ENCODE measurements at regions of chr5 and their contacts with region 1.

Region 1: DNA sequence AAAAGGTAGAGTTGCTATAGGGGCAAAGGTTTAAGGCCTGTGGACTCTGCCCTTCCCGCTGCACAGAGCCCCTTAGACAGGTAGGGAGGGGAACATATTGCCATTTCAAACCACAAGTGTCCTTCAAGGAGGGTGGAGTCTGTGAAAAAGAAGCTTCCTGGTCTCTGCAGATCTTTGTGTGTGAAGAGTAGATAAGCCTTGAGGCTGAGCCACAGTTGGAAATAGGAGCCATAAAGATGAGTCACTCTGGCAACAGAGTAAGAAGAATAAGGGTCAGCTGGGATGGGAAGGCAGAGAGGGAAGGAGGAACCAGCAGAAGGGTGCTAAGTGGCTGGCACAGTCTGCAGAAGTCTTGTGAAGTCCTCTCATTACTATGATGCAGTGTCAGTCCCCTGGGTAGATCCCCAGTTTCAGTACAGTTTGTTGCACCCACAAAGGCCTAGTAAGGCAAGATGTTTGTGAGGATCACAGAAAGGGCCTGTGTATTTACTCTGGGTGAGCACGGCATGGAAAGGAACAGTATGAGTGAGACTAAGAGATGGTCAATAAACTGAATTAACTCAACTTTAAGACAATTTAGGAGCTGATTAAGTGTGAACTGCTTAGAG is 18.1 kb downstream of the GRXCR2 start:
- DNase-seq: peak; percentile 83
- ATAC-seq: peak; percentile 98
- H3K4me3 ChIP-seq: no peak overlapping the region
- H3K27ac ChIP-seq: peak overlapping the region; percentile 77
- H3K4me1 ChIP-seq: peaks cover 24% of the 10 kb centered on the region
- H3K27me3 ChIP-seq: no peaks in the 10 kb centered on the region
- CTCF ChIP-seq: no peak

Region 2: GRCh38 chr5:145598184-145598583 is 256.6 kb before region 1 on chr5:
- CTCF ChIA-PET with region 1: no interaction called
- POLR2A ChIA-PET with region 1: no interaction called
- intact Hi-C with region 1: no loop called
- DNase-seq: no peak
- ATAC-seq: no peak
- H3K4me3 ChIP-seq: no peak overlapping the region
- H3K27ac ChIP-seq: no peak overlapping the region
- H3K4me1 ChIP-seq: no peaks in the 10 kb centered on the region
- H3K27me3 ChIP-seq: no peaks in the 10 kb centered on the region
- CTCF ChIP-seq: no peak

Region 3: DNA sequence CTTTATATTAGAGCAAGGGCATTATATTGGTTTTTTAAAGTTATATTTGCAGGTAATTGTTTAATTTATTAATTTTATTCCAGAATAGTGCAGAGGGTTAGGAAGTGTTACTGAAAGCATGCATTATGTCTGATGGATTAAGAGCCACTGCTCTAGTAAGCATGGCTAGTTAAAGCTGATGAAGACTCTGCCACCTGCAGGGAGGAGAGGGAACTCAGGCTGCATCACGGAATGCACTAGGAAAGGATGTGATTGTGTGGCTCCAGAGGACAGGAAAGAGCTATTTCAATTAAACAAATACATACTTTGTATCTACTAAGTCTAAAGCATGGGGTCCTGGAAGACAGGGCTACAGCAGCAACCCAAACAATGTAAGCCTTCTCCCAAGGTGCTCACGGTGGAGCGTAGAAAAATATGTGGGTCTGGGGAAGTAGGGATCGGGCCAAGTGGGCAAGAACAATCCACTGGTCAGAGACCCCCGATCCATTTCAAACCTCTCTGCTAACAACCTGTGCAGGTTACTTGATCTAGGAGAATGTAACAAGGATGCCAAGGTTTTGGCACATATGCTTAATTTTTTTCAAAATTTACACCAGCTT is 33.3 kb after region 1 on chr5:
- CTCF ChIA-PET with region 1: no interaction called
- POLR2A ChIA-PET with region 1: no interaction called
- intact Hi-C with region 1: loop called (anchors 5 kb)
- DNase-seq: peak; percentile 68
- ATAC-seq: peak; percentile 99
- H3K4me3 ChIP-seq: no peak overlapping the region
- H3K27ac ChIP-seq: no peak overlapping the region
- H3K4me1 ChIP-seq: no peaks in the 10 kb centered on the region
- H3K27me3 ChIP-seq: no peaks in the 10 kb centered on the region
- CTCF ChIP-seq: peak; percentile 75

Measured in PC-3 (cell line).